ENCODE measurements at regions of chr4 and their contacts with region 1.

Region 1: GRCh38 chr4:10403633-10404445 is 53.4 kb downstream of the ZNF518B start:
- DNase-seq: peak; percentile 40
- ATAC-seq: no peak
- H3K4me3 Mint-ChIP-seq: no peak overlapping the region
- H3K27ac Mint-ChIP-seq: no peak overlapping the region
- H3K4me1 Mint-ChIP-seq: no peaks in the 10 kb centered on the region
- H3K27me3 Mint-ChIP-seq: peaks cover 14% of the 10 kb centered on the region

Region 2: DNA sequence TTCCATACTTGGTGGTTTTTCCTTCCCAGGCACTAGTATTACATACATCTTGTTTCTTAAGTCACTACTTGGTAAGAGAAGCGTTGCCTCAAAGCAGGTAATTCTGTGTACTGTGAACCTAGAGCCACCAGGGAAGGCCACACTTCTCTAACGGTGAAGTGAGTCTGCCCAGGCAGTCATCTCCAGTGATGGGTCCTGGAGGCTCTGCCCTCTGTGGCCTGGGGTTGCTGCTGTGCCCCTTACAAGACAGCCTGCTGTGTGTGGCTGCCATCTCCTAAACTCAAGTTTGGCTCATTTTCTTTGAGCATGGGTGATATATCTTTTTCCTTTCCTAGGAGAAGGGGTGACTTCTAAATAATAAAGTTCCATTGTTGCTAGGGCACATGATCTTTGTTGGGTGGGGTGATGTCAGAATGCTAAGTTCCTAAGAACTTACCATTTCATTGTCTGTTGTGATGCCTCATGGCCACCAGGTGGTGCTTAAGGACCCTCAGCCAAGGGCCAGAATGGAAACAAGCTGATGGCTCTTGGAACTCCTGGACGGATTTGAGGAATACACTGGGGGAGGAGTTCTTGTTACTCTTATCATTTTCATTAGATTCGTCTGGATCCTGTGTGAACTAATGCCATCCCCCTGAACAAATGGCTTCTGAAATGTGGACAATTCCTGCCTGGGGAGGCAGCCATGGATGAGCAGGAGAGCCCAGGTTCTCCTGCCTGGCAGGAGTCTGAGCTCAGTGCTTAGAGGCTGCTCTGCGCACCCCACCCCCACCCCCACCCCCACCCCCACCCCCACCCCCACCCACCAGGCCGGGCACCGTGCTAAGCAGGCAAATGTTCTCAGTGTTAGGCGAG is 246.1 kb before region 1 on chr4:
- CTCF ChIA-PET with region 1: interaction called, 97 read pairs
- POLR2A ChIA-PET with region 1: no interaction called
- DNase-seq: peak; percentile 59
- ATAC-seq: peak; percentile 40
- H3K4me3 Mint-ChIP-seq: no peak overlapping the region
- H3K27ac Mint-ChIP-seq: no peak overlapping the region
- H3K4me1 Mint-ChIP-seq: peaks cover 38% of the 10 kb centered on the region
- H3K27me3 Mint-ChIP-seq: peaks cover 7% of the 10 kb centered on the region

Region 3: GRCh38 chr4:10164877-10165283 is 239.0 kb before region 1 on chr4:
- CTCF ChIA-PET with region 1: interaction called, 97 read pairs
- POLR2A ChIA-PET with region 1: no interaction called
- DNase-seq: peak; percentile 31
- ATAC-seq: no peak
- H3K4me3 Mint-ChIP-seq: no peak overlapping the region
- H3K27ac Mint-ChIP-seq: no peak overlapping the region
- H3K4me1 Mint-ChIP-seq: peaks cover 47% of the 10 kb centered on the region
- H3K27me3 Mint-ChIP-seq: peaks cover 2% of the 10 kb centered on the region

Region 4: DNA sequence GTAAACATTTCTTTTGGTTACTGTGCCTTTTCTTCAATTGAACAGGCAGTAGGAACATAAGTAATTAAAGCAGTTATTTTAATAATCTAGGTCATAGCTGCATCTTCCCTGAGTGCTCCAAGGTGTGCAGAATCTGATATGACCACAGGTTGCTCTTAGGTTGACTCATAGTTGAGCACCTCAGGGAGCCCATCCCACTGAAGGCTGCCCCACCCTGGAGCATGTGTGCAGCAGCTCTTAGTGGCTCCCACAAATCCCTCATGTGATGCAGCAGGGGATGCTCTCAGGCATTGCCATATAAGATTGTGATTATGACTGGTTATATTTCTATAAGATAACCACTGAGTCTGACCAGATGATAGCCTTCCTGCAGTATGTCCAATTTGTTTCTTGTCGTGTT is 18.9 kb before region 1 on chr4:
- CTCF ChIA-PET with region 1: interaction called, 12 read pairs
- POLR2A ChIA-PET with region 1: no interaction called
- DNase-seq: no peak
- ATAC-seq: no peak
- H3K4me3 Mint-ChIP-seq: no peak overlapping the region
- H3K27ac Mint-ChIP-seq: no peak overlapping the region
- H3K4me1 Mint-ChIP-seq: no peaks in the 10 kb centered on the region
- H3K27me3 Mint-ChIP-seq: peaks cover 9% of the 10 kb centered on the region

Region 5: DNA sequence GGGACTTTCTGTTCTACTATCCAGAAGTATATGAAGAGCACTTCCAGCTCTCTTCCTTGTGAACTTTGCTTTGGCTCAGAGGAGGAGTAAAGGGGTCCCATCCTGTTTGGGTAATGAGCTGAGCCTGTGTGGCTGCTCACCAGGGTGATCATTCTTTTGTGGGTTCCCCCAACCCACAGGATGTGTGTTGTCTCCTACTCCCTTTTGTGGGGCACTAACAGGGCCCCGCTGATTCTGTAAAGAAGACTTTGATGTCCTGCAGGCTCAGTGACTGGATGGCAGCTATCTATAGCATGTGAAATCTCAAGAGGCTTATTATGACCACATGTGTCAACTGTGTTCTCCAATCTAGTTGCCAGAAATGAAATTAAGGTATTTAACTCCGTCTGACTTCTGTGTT is 12.6 kb after region 1 on chr4:
- CTCF ChIA-PET with region 1: interaction called, 17 read pairs
- POLR2A ChIA-PET with region 1: no interaction called
- DNase-seq: peak; percentile 85
- ATAC-seq: peak; percentile 92
- H3K4me3 Mint-ChIP-seq: peak overlapping the region; percentile 34
- H3K27ac Mint-ChIP-seq: peak overlapping the region; percentile 64
- H3K4me1 Mint-ChIP-seq: peaks cover 46% of the 10 kb centered on the region
- H3K27me3 Mint-ChIP-seq: peaks cover 3% of the 10 kb centered on the region

Region 6: DNA sequence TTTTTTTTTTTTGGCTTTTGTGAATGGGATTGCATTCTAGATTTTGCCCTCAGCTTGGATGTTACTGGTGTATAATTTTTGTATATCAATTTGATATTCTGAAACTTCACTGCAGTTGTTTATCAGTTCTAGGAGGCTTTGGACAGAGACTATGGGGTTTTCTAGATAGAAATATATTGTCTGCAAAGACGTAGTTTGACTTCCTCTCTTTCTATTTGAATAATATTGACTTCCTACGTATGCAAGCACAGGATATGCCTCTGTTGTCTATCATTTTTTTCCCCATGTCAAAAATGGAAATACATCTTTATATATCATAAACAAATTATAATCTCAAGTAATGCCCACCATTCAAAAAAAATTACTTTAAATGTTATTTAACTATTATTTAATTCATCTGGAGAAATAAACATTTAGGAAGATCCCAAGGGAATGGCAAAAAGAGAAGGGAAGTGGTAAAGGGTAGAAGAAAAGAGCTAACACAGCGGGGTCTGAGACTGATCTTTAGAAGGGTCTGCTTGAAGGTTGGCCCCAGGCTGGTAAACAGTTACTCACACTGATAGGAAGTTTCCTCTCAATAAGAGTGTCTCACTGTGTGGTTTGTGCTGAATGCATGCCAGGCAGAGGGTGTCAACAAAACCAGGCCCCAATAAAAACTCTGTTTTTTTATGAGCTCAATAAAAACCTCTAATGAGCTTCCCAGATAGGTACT is 17.7 kb after region 1 on chr4:
- CTCF ChIA-PET with region 1: interaction called, 17 read pairs
- POLR2A ChIA-PET with region 1: no interaction called
- DNase-seq: peak; percentile 25
- ATAC-seq: peak; percentile 57
- H3K4me3 Mint-ChIP-seq: no peak overlapping the region
- H3K27ac Mint-ChIP-seq: peak overlapping the region; percentile 72
- H3K4me1 Mint-ChIP-seq: peaks cover 25% of the 10 kb centered on the region
- H3K27me3 Mint-ChIP-seq: peaks cover 13% of the 10 kb centered on the region

Region 7: GRCh38 chr4:10565166-10565780 is 161.4 kb after region 1 on chr4:
- CTCF ChIA-PET with region 1: no interaction called
- POLR2A ChIA-PET with region 1: no interaction called
- DNase-seq: no peak
- ATAC-seq: no peak
- H3K4me3 Mint-ChIP-seq: no peak overlapping the region
- H3K27ac Mint-ChIP-seq: no peak overlapping the region
- H3K4me1 Mint-ChIP-seq: no peaks in the 10 kb centered on the region
- H3K27me3 Mint-ChIP-seq: peaks cover 12% of the 10 kb centered on the region

Measured in activated CD8-positive, alpha-beta T cell treated with anti-CD3 and anti-CD28 coated beads, Interleukin-2, amount 10 ng/mL, durations not matched to agents 7 days and 5 days (primary cell).